ENCODE measurements at regions of chr6 and their contacts with region 1.

Region 1: DNA sequence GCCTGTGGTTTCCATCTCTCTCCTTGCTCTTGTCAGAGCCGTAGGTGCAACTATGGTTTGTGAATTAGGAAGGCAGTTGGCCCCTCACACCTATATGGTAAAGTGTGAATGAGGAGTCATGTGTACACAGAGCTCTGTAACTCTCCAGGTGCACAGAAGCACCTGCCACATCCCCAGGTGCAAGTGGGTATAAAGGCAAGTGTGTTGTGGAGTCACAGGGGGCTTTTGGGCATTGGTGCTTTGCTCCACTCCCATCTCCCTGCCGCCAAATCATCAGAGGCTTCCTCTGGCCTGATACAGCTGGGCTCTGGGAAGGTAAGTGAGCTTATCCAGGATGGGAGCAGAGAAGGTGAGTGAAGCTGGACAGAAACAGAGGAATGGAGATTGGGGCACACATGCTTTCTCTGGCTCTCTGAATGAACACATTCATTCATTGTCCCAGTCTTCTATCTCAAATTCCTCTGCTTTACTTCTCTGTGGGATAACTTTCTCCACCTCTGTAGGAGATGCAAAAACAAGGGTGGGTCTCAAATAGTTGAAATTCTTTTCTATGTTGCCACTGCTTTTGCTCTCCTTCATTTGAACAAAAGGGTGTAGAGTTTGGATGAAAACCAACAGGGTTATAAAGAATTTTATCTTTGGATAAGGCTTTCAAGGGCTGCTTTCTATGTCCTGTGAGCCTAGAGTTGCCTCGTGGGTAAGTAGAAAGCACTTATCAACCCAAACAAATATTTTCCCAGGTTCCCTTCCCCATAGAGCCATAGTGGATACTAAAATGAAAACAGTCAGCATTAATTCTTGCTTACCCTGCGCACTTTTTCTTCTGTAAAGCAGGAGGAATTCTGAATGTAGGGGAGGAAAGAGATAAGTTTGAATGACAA is 45.0 kb upstream of the RIPOR2 start:
- DNase-seq: no peak
- ATAC-seq: no peak
- H3K4me3 ChIP-seq: no peak overlapping the region
- H3K27ac ChIP-seq: no peak overlapping the region
- H3K4me1 ChIP-seq: no peaks in the 10 kb centered on the region
- H3K27me3 ChIP-seq: 0 out of 5 replicates have a peak, but pooled peaks cover 1 to 7% of the 10 kb centered on the region in 2 experiments
- CTCF ChIP-seq: no peak
- EP300 ChIP-seq: no peak
- POLR2A ChIP-seq: no peak
- RAD21 ChIP-seq: no peak

Region 2: GRCh38 chr6:24919004-24919892 is 61.5 kb before region 1 on chr6:
- CTCF ChIA-PET with region 1: no interaction called
- POLR2A ChIA-PET with region 1: no interaction called
- in situ Hi-C with region 1: no loop called
- intact Hi-C with region 1: loop called (anchors 1 kb)
- DNase-seq: no peak
- ATAC-seq: no peak
- H3K4me3 ChIP-seq: no peak overlapping the region
- H3K27ac ChIP-seq: no peak overlapping the region
- H3K4me1 ChIP-seq: no peaks in the 10 kb centered on the region
- H3K27me3 ChIP-seq: peaks cover 1 to 21% of the 10 kb centered on the region in 2 experiments; a peak in 2 of 5 replicates
- CTCF ChIP-seq: no peak
- EP300 ChIP-seq: no peak
- POLR2A ChIP-seq: no peak
- RAD21 ChIP-seq: no peak